ENCODE measurements at regions of chr6 and their contacts with region 1.

Region 1: GRCh38 chr6:136550330-136551071 is at the start of gene MAP7:
- DNase-seq: no peak
- H3K4me3 ChIP-seq: peak within 1 kb of the TSS; percentile 69
- H3K27me3 ChIP-seq: peaks cover 3% of the 10 kb centered on the region
- CTCF ChIP-seq: peak; percentile 54
- polyA plus RNA-seq, gene MAP7: 0.29 and 0.45 TPM in 2 replicates

Region 2: DNA sequence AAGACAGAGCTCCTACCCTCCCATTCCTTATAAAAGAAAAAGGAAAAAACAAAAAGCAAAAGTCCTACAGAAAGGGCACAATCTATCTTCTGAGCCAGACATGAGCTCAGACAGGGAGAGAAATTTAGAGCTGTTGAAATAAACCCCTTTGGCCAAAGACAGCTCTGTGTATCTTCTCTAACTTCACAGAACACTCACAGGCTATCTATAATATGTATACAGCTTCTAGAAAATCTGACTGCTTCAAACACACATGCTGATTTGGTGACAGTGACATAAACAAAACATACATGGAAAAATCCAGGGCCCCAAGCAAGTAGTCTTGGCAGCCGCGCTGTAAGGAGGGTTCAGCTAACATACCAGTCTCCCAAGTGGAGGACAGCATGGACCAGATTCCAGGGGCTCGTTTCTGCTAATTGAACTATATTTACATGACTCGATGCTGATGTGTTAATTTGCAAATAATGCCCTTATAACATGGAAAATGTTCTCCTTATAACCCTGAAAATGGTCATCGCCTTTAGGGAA is 337.4 kb before region 1 on chr6:
- CTCF ChIA-PET with region 1: no interaction called
- POLR2A ChIA-PET with region 1: no interaction called
- DNase-seq: no peak
- H3K4me3 ChIP-seq: no peak overlapping the region
- H3K27me3 ChIP-seq: no peaks in the 10 kb centered on the region
- CTCF ChIP-seq: no peak

Region 3: DNA sequence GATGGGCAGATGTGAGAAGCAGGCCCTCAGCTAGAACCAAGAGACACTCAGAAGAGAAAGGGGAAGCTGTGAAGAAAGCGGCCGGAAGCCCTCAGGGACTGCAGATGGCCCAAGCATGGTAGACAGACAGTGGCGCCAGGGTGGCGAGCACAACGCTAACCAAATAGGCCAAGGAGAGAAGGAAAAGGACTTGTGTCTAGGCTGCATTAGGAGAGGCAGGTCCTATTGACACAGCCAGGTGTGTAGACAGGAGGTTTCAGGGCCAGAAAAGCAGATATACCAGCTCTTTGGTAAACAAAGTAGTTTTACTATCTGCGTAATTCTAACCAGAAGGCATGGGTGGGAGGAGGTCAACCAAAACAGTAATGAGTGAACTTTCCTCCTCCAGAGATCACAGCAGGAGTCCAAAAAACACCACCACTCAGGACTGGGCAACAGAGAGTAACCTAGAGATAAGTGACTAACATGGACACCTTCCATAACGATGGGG is 15.6 kb after region 1 on chr6:
- CTCF ChIA-PET with region 1: interaction called, 19 read pairs
- POLR2A ChIA-PET with region 1: no interaction called
- DNase-seq: no peak
- H3K4me3 ChIP-seq: no peak overlapping the region
- H3K27me3 ChIP-seq: no peaks in the 10 kb centered on the region
- CTCF ChIP-seq: no peak

Measured in BJ (cell line).